ENCODE measurements at regions of chr1 and their contacts with region 1.

Region 1: GRCh38 chr1:34013958-34014737 is 150.3 kb downstream of the HMGB4 start:
- DNase-seq: peak; percentile 9 to 90
- H3K4me3 ChIP-seq: no peak overlapping the region
- H3K27ac ChIP-seq: no peak overlapping the region
- H3K4me1 ChIP-seq: peaks cover 0 to 5% (median 2%) of the 10 kb centered on the region in 4 experiments; a peak in 4 of 7 replicates
- H3K27me3 ChIP-seq: no peaks in the 10 kb centered on the region
- CTCF ChIP-seq: peak; percentile 80 to 96 (median 90)
- EP300 ChIP-seq: no peak
- POLR2A ChIP-seq: no peak
- RAD21 ChIP-seq: peak; percentile 68 to 78

Region 2: GRCh38 chr1:33735621-33736020 is 278.5 kb before region 1 on chr1:
- CTCF ChIA-PET with region 1: interaction called, 15 read pairs
- POLR2A ChIA-PET with region 1: no interaction called
- DNase-seq: no peak
- H3K4me3 ChIP-seq: no peak overlapping the region
- H3K27ac ChIP-seq: no peak overlapping the region
- H3K4me1 ChIP-seq: peaks cover 0 to 6% (median 0%) of the 10 kb centered on the region in 4 experiments; a peak in 2 of 7 replicates
- H3K27me3 ChIP-seq: no peaks in the 10 kb centered on the region
- CTCF ChIP-seq: no peak
- EP300 ChIP-seq: no peak
- POLR2A ChIP-seq: no peak
- RAD21 ChIP-seq: peak; percentile 15 to 28; a peak in 3 of 4 replicates

Region 3: GRCh38 chr1:33997127-33998036 is 16.8 kb before region 1 on chr1:
- CTCF ChIA-PET with region 1: interaction called, 75 read pairs
- POLR2A ChIA-PET with region 1: no interaction called
- DNase-seq: no peak
- H3K4me3 ChIP-seq: no peak overlapping the region
- H3K27ac ChIP-seq: no peak overlapping the region
- H3K4me1 ChIP-seq: no peaks in the 10 kb centered on the region
- H3K27me3 ChIP-seq: no peaks in the 10 kb centered on the region
- CTCF ChIP-seq: no peak
- EP300 ChIP-seq: no peak
- POLR2A ChIP-seq: no peak
- RAD21 ChIP-seq: no peak

Region 4: DNA sequence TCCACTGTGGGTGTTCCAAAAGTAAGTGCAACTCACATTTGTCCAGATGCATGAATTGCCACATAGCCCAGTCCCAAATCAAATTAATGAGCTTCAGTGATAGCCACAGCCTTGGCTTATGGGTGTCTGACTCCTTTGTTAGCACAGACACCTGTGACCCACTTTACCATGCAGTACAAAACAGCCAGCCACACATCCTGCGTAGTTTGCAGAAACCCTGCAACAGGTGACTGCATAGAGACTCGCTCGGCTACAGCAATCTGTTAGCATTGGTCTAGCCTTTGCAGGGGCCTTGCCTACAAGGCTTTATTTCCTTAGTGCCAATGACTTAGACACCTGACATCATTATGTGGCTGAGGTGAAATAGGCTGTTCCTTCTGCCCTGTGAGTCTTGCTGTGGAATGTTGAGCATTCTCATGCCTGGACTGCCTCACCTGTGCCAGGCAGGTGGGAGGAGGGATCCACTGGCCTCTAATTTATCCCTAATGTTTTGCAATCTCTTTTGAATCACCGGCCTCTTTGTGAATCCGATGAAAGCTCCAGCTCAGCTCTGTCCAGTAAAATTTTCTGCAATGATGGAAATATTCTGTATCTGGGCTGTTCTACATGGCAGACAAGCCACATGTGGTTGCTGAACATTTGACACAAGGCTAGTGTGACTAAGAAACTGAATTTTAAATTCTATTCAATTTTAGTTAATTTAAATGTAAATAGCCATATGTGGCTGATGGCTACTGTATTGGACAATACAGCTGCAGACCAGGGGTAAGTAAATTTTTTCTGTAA is 15.6 kb after region 1 on chr1:
- CTCF ChIA-PET with region 1: interaction called, 35 read pairs
- POLR2A ChIA-PET with region 1: no interaction called
- DNase-seq: no peak
- H3K4me3 ChIP-seq: no peak overlapping the region
- H3K27ac ChIP-seq: no peak overlapping the region
- H3K4me1 ChIP-seq: no peaks in the 10 kb centered on the region
- H3K27me3 ChIP-seq: no peaks in the 10 kb centered on the region
- CTCF ChIP-seq: no peak
- EP300 ChIP-seq: no peak
- POLR2A ChIP-seq: no peak
- RAD21 ChIP-seq: no peak

Region 5: GRCh38 chr1:34113887-34114286 is 99.7 kb after region 1 on chr1:
- CTCF ChIA-PET with region 1: interaction called, 34 read pairs
- POLR2A ChIA-PET with region 1: no interaction called
- DNase-seq: peak in 1 of 2 experiments; percentile 48
- H3K4me3 ChIP-seq: no peak overlapping the region
- H3K27ac ChIP-seq: no peak overlapping the region
- H3K4me1 ChIP-seq: 0 out of 7 replicates have a peak, but pooled peaks cover 0 to 3% (median 0%) of the 10 kb centered on the region in 4 experiments
- H3K27me3 ChIP-seq: no peaks in the 10 kb centered on the region
- CTCF ChIP-seq: peak in 2 of 3 experiments; percentile 59 to 60; a peak in 3 of 4 replicates
- EP300 ChIP-seq: no peak
- POLR2A ChIP-seq: no peak
- RAD21 ChIP-seq: peak; percentile 51 to 61